K562 (cell line): ENCODE measurements at regions of chr11 and their contacts with region 1.

Region 1: DNA sequence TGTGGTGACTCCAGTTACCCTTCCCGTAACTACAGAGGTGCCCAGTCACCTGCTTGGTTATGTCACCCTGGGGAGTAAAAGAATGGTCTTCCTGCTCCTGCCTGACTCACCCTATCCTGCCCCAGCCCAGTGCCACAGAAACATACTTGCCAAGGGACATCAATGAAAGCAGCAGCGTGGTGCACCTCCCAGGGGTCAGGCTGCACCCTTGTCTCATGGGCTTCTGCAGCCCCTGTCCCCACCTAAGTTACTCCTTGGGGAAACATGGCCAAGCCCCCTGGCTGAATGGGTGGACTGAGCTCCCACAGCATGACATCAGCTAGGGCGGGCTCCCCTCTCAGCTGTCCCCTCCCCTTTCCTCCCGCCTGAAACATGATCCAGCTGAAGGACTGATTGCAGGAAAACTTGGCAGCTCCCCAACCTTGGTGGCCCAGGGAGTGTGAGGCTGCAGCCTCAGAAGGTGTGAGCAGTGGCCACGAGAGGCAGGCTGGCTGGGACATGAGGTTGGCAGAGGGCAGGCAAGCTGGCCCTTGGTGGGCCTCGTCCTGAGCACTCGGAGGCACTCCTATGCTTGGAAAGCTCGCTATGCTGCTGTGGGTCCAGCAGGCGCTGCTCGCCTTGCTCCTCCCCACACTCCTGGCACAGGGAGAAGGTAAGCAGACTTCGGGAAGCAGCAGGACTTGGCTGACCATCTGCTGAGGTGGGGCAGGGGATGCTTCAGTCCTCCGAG is at the start of gene HTR3A:
- DNase-seq: peak; percentile 48 to 72 (median 60)
- ATAC-seq: peak; percentile 94
- H3K4me3 ChIP-seq: no peak within 1 kb of the TSS
- H3K27ac ChIP-seq: no peak within 1 kb of the TSS
- H3K4me1 ChIP-seq: peaks cover 0 to 7% of the 10 kb centered on the region in 2 experiments; a peak in 2 of 5 replicates
- H3K27me3 ChIP-seq: peaks cover 22 to 77% of the 10 kb centered on the region in 2 experiments
- CTCF ChIP-seq: no peak
- EP300 ChIP-seq: no peak
- POLR2A ChIP-seq: no peak
- RAD21 ChIP-seq: no peak
- polyA plus RNA-seq, gene HTR3A: not detected

Region 2: DNA sequence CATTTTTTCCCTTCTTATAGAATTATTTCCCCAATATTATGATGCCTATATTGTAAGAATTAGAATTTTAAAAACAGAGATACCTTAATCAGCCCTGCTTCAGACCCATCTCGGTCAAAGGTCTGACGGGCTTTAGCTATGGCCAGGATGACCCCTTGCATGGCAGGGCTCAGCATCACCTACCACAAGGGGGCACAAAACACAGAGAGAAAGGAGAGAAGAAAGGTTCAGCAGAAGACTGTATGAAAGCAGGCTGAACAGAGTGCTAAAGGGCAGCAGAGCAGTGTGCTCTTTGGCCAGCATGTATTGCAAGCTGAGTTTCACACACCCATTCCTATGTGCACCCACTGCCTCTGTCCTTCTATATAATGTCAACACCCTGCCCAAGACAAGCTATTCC is 168.5 kb before region 1 on chr11:
- CTCF ChIA-PET with region 1: no interaction called
- POLR2A ChIA-PET with region 1: no interaction called
- in situ Hi-C with region 1: no loop called
- intact Hi-C with region 1: loop called (anchors 10 kb)
- DNase-seq: peak; percentile 22 to 51 (median 34)
- ATAC-seq: peak; percentile 96
- H3K4me3 ChIP-seq: no peak overlapping the region
- H3K27ac ChIP-seq: no peak overlapping the region
- H3K4me1 ChIP-seq: no peaks in the 10 kb centered on the region
- H3K27me3 ChIP-seq: no peaks in the 10 kb centered on the region
- CTCF ChIP-seq: peak; percentile 53 to 69 (median 64)
- EP300 ChIP-seq: no peak
- POLR2A ChIP-seq: no peak
- RAD21 ChIP-seq: peak; percentile 29 to 60

Region 3: GRCh38 chr11:113952588-113952987 is 22.3 kb before region 1 on chr11:
- CTCF ChIA-PET with region 1: no interaction called
- POLR2A ChIA-PET with region 1: no interaction called
- in situ Hi-C with region 1: no loop called
- intact Hi-C with region 1: no loop called
- DNase-seq: no peak
- ATAC-seq: no peak
- H3K4me3 ChIP-seq: no peak overlapping the region
- H3K27ac ChIP-seq: no peak overlapping the region
- H3K4me1 ChIP-seq: no peaks in the 10 kb centered on the region
- H3K27me3 ChIP-seq: peaks cover 22 to 55% of the 10 kb centered on the region in 2 experiments
- CTCF ChIP-seq: no peak
- EP300 ChIP-seq: no peak
- POLR2A ChIP-seq: no peak
- RAD21 ChIP-seq: no peak